ENCODE measurements at regions of chr2 and their contacts with region 1.

Region 1: DNA sequence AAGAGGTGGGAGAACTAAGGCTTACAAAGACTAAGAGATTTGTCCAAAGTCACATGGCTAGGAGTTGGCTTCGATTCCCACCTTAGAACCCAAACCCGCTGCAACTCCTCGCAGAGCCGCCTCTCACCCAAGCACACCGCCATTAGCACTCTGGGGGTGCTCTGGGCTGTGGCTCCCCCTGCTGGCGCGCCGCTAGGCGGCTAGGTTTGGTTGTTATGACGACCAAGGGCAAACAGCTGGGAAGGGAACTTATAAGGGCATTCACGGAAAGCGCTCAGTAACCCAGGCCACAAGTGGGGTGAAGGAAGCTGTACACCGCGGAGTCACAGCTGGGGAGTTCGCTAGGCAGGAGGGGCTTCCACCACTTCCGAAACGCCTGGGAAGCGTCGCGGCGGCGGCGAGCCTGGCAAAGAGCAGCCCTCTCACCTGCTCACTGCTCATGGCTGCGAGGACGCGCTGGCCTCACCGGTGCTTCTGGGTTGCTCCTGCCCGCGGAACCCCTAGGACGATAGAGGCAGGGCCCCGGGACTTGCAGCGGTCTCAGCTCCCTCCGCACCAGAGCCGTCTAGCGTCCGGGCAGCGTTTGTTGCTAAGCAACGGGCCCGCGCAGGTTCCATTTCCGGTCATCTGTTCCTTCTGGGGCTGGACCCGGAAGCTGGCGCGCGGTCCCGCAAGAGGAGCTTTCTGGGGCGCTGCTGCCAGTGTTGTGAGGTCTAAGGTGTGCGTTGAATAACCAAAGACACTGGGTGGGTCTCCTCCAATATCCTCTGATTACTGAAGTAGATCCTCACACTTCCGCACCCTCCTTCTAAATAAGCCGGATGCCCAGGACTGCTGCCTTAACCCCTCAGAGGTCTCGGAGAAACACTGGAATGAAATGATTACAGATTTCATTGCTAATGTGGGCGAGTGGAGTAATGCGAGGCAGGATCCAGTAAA is at the start of gene DNAH7:
- DNase-seq: peak; percentile 96
- ATAC-seq: peak; percentile 92
- H3K4me3 ChIP-seq: peak within 1 kb of the TSS; percentile 46 to 81 (median 64)
- H3K4me3 Mint-ChIP-seq: peak within 1 kb of the TSS; percentile 96
- H3K27ac ChIP-seq: peak within 1 kb of the TSS; percentile 30 to 73
- H3K27ac Mint-ChIP-seq: peak within 1 kb of the TSS; percentile 93
- H3K4me1 ChIP-seq: peaks cover 12 to 13% of the 10 kb centered on the region in 2 donors
- H3K4me1 Mint-ChIP-seq: peaks cover 15% of the 10 kb centered on the region
- H3K27me3 ChIP-seq: no peaks in the 10 kb centered on the region
- H3K27me3 Mint-ChIP-seq: peaks cover 2% of the 10 kb centered on the region
- CTCF ChIP-seq: peak; percentile 97
- total RNA-seq, gene DNAH7: 0.05 TPM in 1 of 2 replicates, not detected in the other

Region 2: GRCh38 chr2:195664528-195664927 is 404.0 kb before region 1 on chr2:
- CTCF ChIA-PET with region 1: interaction called, 20 read pairs
- POLR2A ChIA-PET with region 1: no interaction called
- intact Hi-C with region 1: loop called (anchors 1 kb)
- DNase-seq: no peak
- ATAC-seq: no peak
- H3K4me3 ChIP-seq: no peak overlapping the region
- H3K4me3 Mint-ChIP-seq: no peak overlapping the region
- H3K27ac ChIP-seq: no peak overlapping the region
- H3K27ac Mint-ChIP-seq: peak overlapping the region; percentile 73
- H3K4me1 ChIP-seq: peaks cover 24 to 46% of the 10 kb centered on the region in 2 donors
- H3K4me1 Mint-ChIP-seq: peaks cover 53% of the 10 kb centered on the region
- H3K27me3 ChIP-seq: no peaks in the 10 kb centered on the region
- H3K27me3 Mint-ChIP-seq: no peaks in the 10 kb centered on the region
- CTCF ChIP-seq: peak; percentile 22

Region 3: GRCh38 chr2:196337208-196337953 is 268.8 kb after region 1 on chr2:
- CTCF ChIA-PET with region 1: interaction called, 199 read pairs
- POLR2A ChIA-PET with region 1: no interaction called
- intact Hi-C with region 1: loop called (anchors 2 kb)
- DNase-seq: peak; percentile 58
- ATAC-seq: peak; percentile 51
- H3K4me3 ChIP-seq: no peak overlapping the region
- H3K4me3 Mint-ChIP-seq: no peak overlapping the region
- H3K27ac ChIP-seq: peak overlapping the region in 1 of 2 donors; percentile 52
- H3K27ac Mint-ChIP-seq: peak overlapping the region; percentile 43
- H3K4me1 ChIP-seq: peaks cover 10 to 11% of the 10 kb centered on the region in 2 donors
- H3K4me1 Mint-ChIP-seq: peaks cover 19% of the 10 kb centered on the region
- H3K27me3 ChIP-seq: no peaks in the 10 kb centered on the region
- H3K27me3 Mint-ChIP-seq: no peaks in the 10 kb centered on the region
- CTCF ChIP-seq: peak; percentile 66

Region 4: GRCh38 chr2:196453613-196454047 is 385.1 kb after region 1 on chr2:
- CTCF ChIA-PET with region 1: interaction called, 33 read pairs
- POLR2A ChIA-PET with region 1: no interaction called
- intact Hi-C with region 1: no loop called
- DNase-seq: peak; percentile 63
- ATAC-seq: peak; percentile 43
- H3K4me3 ChIP-seq: no peak overlapping the region
- H3K4me3 Mint-ChIP-seq: no peak overlapping the region
- H3K27ac ChIP-seq: no peak overlapping the region
- H3K27ac Mint-ChIP-seq: no peak overlapping the region
- H3K4me1 ChIP-seq: no peaks in the 10 kb centered on the region
- H3K4me1 Mint-ChIP-seq: no peaks in the 10 kb centered on the region
- H3K27me3 ChIP-seq: peaks cover 0 to 5% (median 0%) of the 10 kb centered on the region in 4 experiments
- H3K27me3 Mint-ChIP-seq: peaks cover 23% of the 10 kb centered on the region
- CTCF ChIP-seq: peak; percentile 52

Region 5: DNA sequence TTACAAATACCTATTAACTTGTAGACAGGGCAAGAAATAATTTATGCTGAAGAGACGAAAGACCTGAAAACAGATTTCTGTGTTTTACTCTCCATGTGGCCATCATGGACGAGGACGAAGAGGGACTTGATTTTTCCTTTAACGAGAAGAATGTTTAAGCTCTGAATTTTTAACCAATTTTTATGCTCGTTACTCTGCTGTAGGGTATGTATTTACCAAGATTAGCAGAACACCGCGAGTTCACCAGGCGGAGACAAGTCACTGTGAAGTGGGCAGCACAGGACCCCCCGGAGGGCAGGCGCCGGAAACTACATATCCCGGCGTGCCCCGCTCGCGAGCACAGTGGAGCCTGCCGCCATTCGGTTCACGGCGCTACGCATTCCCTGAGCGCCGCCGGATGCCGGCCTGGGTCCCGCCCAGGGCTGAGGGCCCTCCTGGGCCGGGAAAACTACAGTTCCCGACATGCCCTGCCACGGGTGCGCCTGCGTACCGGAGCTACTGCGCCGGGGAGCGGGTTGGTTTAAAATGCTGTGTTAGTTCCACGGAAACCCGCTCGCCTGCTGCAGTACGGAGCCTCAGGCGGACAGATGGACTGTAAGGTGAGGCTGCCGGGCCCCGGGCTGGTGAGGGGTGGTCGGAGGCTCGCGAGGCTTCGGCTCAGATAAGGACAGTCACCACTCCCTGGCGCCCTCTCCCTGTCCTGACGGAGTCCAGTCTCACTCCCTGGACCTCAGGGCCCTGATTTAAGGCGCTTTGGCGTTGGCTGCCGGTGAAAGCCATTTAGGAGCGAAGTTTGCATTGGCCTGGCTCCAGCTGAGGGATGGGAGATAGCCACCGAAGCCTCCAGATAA is 570.9 kb after region 1 on chr2 and contains the start of gene CCDC150:
- CTCF ChIA-PET with region 1: no interaction called
- POLR2A ChIA-PET with region 1: no interaction called
- intact Hi-C with region 1: loop called (anchors 5 kb)
- DNase-seq: peak; percentile 94
- ATAC-seq: peak; percentile 100
- H3K4me3 ChIP-seq: peak within 1 kb of the TSS; percentile 54 to 88 (median 68)
- H3K4me3 Mint-ChIP-seq: peak within 1 kb of the TSS; percentile 94
- H3K27ac ChIP-seq: peak within 1 kb of the TSS in 1 of 2 donors; percentile 56
- H3K27ac Mint-ChIP-seq: peak within 1 kb of the TSS; percentile 70
- H3K4me1 ChIP-seq: peaks cover 7 to 17% of the 10 kb centered on the region in 2 donors
- H3K4me1 Mint-ChIP-seq: peaks cover 21% of the 10 kb centered on the region
- H3K27me3 ChIP-seq: no peaks in the 10 kb centered on the region
- H3K27me3 Mint-ChIP-seq: peaks cover 8% of the 10 kb centered on the region
- CTCF ChIP-seq: no peak
- total RNA-seq, gene CCDC150: 4.9 and 5.0 TPM in 2 replicates